PC-3 (cell line): ENCODE measurements at regions of chr18 and their contacts with region 1.

Region 1: DNA sequence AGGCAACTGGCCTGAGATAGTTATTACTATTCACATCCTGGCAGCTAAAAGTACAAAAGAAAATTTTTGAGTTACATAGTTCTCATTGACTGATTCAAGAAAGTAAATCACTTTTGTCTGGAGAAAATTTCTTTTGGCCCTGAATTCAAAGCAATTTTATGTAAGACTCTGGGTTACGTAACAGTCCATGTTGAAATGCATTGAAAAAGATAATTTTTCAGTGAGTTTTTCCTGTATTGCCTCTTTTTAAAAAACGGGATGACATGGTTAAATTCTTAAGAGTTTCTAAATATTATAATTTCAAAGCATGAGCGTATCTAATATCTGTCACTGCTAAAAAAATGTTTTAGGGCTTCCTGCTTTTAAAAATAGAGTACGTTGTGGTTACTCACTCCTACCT is 72.7 kb downstream of the ANKRD12 start:
- DNase-seq: no peak
- ATAC-seq: no peak
- H3K4me3 ChIP-seq: no peak overlapping the region
- H3K27ac ChIP-seq: no peak overlapping the region
- H3K4me1 ChIP-seq: no peaks in the 10 kb centered on the region
- H3K27me3 ChIP-seq: no peaks in the 10 kb centered on the region
- CTCF ChIP-seq: no peak

Region 2: DNA sequence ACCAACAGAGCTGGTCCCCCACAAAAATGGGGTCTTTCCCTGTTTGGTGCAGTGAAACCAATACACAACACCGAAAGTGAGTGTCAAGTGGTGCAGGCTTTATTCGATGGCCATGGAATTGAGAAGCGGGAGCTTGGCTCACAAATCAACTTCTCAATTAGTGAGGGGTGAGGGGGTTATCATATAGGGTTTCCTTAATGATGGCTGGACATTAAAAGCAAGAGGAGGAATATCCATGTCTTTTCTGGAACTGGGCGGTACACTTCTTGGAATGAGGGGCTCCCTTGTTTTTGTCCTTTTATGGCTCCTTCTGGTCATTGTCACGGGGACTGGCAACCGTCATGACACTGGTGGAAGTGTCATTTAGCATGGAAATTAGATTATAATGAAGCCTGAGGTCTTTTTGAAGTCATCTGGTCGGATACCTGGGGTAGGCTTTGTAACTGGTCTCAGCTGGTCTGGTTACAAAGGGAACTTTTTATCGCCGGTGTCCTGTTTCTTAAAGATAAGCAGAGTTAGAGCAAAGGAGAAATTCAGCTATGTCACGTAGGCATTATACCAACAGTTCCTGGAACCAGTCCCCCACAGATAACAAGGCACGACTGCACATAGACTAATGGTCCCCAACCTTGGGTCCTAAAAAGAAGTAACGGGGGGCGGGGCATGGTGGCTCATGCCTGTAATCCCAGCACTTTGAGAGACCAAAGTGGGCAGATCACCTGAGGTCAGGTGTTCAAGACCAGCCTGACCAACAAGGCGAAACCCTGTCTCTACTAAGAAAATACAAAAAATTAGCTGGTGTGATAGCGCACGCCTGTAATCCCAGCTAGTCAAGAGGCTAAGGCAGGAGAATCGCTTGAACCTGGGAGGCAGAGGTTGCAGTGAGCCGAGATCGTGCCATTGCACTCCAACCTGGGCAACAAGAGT is 200.3 kb before region 1 on chr18:
- CTCF ChIA-PET with region 1: no interaction called
- POLR2A ChIA-PET with region 1: no interaction called
- intact Hi-C with region 1: no loop called
- DNase-seq: no peak
- ATAC-seq: no peak
- H3K4me3 ChIP-seq: no peak overlapping the region
- H3K27ac ChIP-seq: no peak overlapping the region
- H3K4me1 ChIP-seq: no peaks in the 10 kb centered on the region
- H3K27me3 ChIP-seq: no peaks in the 10 kb centered on the region
- CTCF ChIP-seq: no peak

Region 3: DNA sequence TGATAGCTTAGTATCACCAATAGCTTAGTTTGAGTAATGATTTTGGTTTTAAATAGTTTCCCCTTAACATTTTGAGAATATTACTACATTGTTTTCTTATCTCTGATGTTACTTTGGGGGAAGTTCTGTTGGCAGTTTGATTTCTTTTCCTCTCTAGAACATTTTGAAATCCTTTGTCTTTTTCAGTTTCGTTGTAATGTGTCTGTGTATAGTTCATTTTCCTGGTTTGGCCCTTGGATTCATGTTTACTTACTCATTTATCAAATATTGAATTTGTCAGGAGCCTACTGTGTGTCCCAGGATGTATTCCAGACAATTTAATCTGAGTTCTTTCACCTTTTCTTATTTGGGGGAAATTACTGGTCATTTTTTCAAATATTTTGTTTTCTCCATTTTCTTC is 56.0 kb before region 1 on chr18:
- CTCF ChIA-PET with region 1: no interaction called
- POLR2A ChIA-PET with region 1: no interaction called
- intact Hi-C with region 1: loop called (anchors 10 kb)
- DNase-seq: no peak
- ATAC-seq: peak; percentile 40; the same call in 1 of the 2 replicates
- H3K4me3 ChIP-seq: no peak overlapping the region
- H3K27ac ChIP-seq: no peak overlapping the region
- H3K4me1 ChIP-seq: peaks cover 10% of the 10 kb centered on the region
- H3K27me3 ChIP-seq: no peaks in the 10 kb centered on the region
- CTCF ChIP-seq: no peak